Activated T-helper 2 cell treated with anti-CD3 and anti-CD28 coated beads, Interferon-gamma antibody, Interleukin-2, Interleukin-4, amounts not matched to agents 10 μg/mL and 5 μg/mL and 100 μg/mL, durations not matched to agents 14 hours and 24 hours and 36 hours (primary cell): ENCODE measurements at regions of chr21 and their contacts with region 1.

Region 1: DNA sequence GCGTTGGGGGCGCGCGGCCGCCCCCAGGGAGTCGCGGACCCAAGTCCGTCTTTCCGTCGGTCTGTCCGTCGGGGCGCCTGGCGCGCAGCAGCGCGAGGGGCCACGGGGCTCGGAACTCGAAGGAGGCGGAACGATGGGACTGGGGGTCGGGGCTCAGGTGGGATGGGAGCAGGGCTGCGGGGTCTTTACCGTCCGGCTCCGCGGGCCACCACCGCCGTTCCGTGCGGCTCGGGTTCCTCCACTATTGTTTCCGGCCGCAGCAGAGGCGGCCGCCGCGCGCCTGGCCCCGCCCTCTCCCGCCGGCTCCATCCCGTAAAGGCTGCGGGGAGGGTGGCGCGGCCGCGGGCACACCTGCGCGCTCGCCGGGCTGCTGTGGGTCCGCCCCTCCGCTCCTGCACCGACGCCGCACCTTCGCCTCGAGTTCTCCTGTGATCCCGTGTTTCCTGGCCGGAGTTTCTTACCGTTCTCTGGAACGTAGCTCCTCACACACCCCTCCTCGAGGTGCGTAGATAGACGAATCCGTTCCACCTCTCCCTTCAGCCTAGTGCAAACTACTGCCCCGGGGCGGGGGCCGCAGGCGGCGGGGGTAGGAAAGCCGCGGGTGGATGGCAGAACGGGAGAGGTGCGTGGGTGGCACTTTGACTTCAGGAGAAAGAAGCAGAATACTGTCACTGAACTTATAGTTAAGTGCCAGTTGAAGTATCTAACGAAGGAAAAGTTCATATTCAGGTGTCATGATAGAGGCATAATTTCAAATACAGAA is at the start of gene C21orf91:
- DNase-seq: peak; percentile 86
- H3K4me3 Mint-ChIP-seq: peak within 1 kb of the TSS; percentile 94
- H3K27ac Mint-ChIP-seq: peak within 1 kb of the TSS; percentile 100
- H3K4me1 Mint-ChIP-seq: peaks cover 35% of the 10 kb centered on the region
- H3K27me3 Mint-ChIP-seq: no peaks in the 10 kb centered on the region
- total RNA-seq, gene C21orf91: 22.5 and 27.0 TPM in 2 replicates

Region 2: DNA sequence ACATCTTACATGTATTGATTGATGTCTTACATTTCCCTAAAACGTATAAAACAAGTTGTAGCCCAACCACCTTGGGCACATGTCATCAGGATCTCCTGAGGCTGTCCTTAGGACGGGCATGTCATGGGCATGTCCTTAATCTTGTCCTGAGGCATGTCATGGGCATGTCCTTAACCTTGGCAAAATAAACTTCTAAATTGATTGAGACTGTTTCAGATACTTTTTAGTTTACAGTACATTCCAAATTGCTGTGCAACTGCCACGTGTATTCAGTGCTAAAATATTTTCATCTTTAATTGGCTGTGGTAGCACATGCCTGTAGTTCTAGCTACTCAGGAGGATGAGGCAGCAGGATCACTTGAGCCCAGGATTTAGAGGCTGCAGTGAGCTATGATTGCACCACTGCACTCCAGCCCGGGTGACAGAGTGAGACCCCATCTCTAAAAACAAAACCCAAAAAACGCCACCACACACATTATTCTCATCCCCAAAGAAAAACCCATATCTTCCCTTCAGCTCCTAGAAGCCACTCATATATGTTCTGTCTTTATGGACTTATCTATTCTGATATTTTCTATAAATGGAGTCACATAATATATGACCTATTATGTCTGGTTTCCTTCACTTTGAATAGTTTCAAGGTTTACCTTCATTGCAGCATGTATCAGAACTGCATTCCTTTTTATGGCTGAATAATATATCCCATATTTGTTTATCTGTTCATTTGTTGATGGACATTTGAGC is 110.6 kb before region 1 on chr21:
- intact Hi-C with region 1: loop called (anchors 1 kb)
- DNase-seq: no peak
- H3K4me3 Mint-ChIP-seq: no peak overlapping the region
- H3K27ac Mint-ChIP-seq: no peak overlapping the region
- H3K4me1 Mint-ChIP-seq: peaks cover 28% of the 10 kb centered on the region
- H3K27me3 Mint-ChIP-seq: peaks cover 12% of the 10 kb centered on the region

Region 3: GRCh38 chr21:17793246-17794123 is 25.8 kb before region 1 on chr21:
- intact Hi-C with region 1: loop called (anchors 1 kb)
- DNase-seq: no peak
- H3K4me3 Mint-ChIP-seq: peak overlapping the region; percentile 52
- H3K27ac Mint-ChIP-seq: peak overlapping the region; percentile 76
- H3K4me1 Mint-ChIP-seq: peaks cover 59% of the 10 kb centered on the region
- H3K27me3 Mint-ChIP-seq: no peaks in the 10 kb centered on the region